ENCODE measurements at regions of chr12 and their contacts with region 1.

Region 1: DNA sequence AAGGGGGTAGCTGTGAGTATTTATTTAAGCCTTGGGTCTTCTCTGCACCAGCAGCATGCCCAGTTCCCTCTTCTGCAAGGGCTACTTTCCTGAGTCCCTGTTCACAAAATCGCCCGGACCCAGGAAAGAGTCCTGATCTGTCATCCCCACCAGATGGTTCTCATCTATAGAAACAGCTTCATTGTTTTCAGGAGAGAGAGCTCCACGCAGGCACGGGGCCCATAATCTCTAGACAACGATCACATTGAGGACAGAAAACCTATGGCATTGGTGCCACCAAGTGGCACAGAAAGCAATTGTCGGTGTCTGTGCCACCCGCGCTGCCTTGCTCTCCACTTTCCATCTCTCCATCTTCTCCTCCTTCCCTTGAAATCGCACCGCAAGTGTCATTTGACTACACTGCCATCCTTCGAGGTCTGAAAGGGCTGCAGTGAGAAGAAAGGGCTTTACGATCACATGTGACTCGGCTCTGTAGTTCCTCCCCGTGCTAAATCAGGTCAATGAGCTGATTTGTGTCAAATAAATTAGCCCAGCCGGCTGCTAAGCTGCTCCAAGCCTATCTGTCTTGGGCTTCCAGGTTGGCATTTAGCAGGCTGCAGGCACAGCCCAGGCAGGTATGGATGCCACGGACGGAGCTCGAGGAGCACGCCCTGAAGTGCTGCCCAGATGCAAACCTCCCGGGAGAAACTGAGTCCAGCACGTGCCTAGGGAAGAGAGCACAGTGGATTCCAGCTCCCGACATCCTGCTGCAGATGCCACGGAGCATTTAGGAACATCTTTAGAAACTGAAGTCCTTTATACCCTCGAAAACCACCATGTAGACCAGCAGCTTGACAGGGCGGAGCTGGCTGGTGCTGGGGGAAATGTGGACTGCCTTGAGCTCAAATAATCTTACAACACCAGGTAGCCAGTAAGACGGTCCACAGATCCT is 28.8 kb downstream of the SPRING1 start:
- DNase-seq: peak; percentile 86
- ATAC-seq: peak; percentile 92
- H3K4me3 ChIP-seq: peak overlapping the region; percentile 61
- H3K27ac ChIP-seq: no peak overlapping the region
- H3K4me1 ChIP-seq: peaks cover 13% of the 10 kb centered on the region
- H3K27me3 ChIP-seq: peaks cover 8% of the 10 kb centered on the region
- CTCF ChIP-seq: peak; percentile 92

Region 2: DNA sequence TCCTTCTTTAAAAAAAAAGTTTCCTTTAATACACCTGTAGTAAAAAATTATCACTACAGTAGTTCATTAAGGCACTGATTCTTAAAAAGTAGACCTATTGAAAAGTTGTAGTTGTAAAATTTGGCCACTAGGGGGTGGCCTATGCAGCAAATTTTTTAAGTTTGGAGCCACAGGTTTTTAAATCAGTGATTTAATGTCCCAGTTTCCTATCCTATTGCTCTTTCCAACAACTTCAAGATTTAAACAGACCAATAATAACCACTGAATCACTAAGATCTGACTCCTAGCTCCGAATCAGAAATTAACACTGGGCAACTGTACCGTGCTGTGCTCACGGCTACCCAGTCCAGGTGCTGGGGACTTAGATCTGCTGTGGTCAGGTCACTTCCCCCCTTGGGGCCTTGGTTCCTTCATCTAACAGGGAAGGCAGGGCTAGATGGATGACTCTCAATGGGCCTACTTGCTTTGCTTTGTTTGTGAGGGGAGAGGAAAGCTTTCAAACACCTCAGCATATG is 710.9 kb before region 1 on chr12:
- CTCF ChIA-PET with region 1: no interaction called
- POLR2A ChIA-PET with region 1: no interaction called
- intact Hi-C with region 1: loop called (anchors 5 kb)
- DNase-seq: peak; percentile 81
- ATAC-seq: peak; percentile 66
- H3K4me3 ChIP-seq: no peak overlapping the region
- H3K27ac ChIP-seq: no peak overlapping the region
- H3K4me1 ChIP-seq: peaks cover 17% of the 10 kb centered on the region
- H3K27me3 ChIP-seq: no peaks in the 10 kb centered on the region
- CTCF ChIP-seq: peak; percentile 97

Region 3: GRCh38 chr12:116620492-116621191 is 88.4 kb before region 1 on chr12:
- CTCF ChIA-PET with region 1: no interaction called
- POLR2A ChIA-PET with region 1: no interaction called
- intact Hi-C with region 1: no loop called
- DNase-seq: no peak
- ATAC-seq: no peak
- H3K4me3 ChIP-seq: no peak overlapping the region
- H3K27ac ChIP-seq: no peak overlapping the region
- H3K4me1 ChIP-seq: peaks cover 4% of the 10 kb centered on the region; the same call in 1 of the 2 replicates
- H3K27me3 ChIP-seq: no peaks in the 10 kb centered on the region
- CTCF ChIP-seq: no peak

Region 4: GRCh38 chr12:116818948-116819832 is 110.1 kb after region 1 on chr12:
- CTCF ChIA-PET with region 1: no interaction called
- POLR2A ChIA-PET with region 1: no interaction called
- intact Hi-C with region 1: loop called (anchors 5 kb)
- DNase-seq: peak; percentile 92
- ATAC-seq: peak; percentile 92
- H3K4me3 ChIP-seq: peak overlapping the region; percentile 86
- H3K27ac ChIP-seq: peak overlapping the region; percentile 73
- H3K4me1 ChIP-seq: peaks cover 10% of the 10 kb centered on the region
- H3K27me3 ChIP-seq: no peaks in the 10 kb centered on the region
- CTCF ChIP-seq: no peak

Region 5: DNA sequence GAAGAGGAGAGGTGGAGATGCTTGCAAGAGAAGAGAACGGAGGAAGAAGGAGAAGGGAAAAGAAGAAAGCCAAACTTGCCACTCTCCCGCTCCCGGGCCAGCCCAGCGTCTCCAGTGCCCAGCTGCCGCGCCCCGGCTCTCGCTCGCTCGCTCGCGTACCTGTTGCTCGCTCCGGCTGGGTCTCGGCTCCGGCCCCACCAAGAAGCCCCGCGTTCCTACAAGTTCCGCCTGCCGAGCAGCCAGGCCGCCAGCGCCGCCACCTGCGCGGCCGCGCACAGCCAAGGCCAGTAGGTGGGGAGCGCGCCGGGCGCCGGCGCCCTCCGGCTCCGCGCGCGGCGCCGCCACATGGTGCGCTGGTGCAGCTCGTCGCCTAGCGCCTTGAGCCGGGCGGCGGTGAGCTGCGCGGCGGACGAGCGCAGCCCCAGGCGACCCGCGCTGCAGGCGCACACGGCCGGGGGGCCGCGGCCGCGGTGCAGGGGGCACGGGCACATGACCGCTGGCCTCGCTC is 171.8 kb after region 1 on chr12:
- CTCF ChIA-PET with region 1: interaction called, 24 read pairs
- POLR2A ChIA-PET with region 1: no interaction called
- intact Hi-C with region 1: no loop called
- DNase-seq: peak; percentile 72
- ATAC-seq: peak; percentile 83
- H3K4me3 ChIP-seq: peak overlapping the region; percentile 72
- H3K27ac ChIP-seq: no peak overlapping the region
- H3K4me1 ChIP-seq: peaks cover 30% of the 10 kb centered on the region
- H3K27me3 ChIP-seq: peaks cover 27% of the 10 kb centered on the region
- CTCF ChIP-seq: no peak; the same call in 1 of the 2 replicates

Measured in PC-3 (cell line).